ENCODE measurements at regions of chr9 and their contacts with region 1.

Region 1: GRCh38 chr9:97921959-97922724 is at the start of gene TRMO:
- DNase-seq: peak; percentile 99
- H3K4me3 Mint-ChIP-seq: peak within 1 kb of the TSS; percentile 93
- H3K27ac Mint-ChIP-seq: peak within 1 kb of the TSS; percentile 98
- H3K4me1 Mint-ChIP-seq: peaks cover 47% of the 10 kb centered on the region
- H3K27me3 Mint-ChIP-seq: peaks cover 2% of the 10 kb centered on the region
- total RNA-seq, gene TRMO: 9.8 and 13.0 TPM in 2 replicates

Region 2: GRCh38 chr9:97425336-97425972 is 496.7 kb before region 1 on chr9:
- intact Hi-C with region 1: no loop called
- DNase-seq: no peak
- H3K4me3 Mint-ChIP-seq: no peak overlapping the region
- H3K27ac Mint-ChIP-seq: no peak overlapping the region
- H3K4me1 Mint-ChIP-seq: no peaks in the 10 kb centered on the region
- H3K27me3 Mint-ChIP-seq: no peaks in the 10 kb centered on the region

Region 3: DNA sequence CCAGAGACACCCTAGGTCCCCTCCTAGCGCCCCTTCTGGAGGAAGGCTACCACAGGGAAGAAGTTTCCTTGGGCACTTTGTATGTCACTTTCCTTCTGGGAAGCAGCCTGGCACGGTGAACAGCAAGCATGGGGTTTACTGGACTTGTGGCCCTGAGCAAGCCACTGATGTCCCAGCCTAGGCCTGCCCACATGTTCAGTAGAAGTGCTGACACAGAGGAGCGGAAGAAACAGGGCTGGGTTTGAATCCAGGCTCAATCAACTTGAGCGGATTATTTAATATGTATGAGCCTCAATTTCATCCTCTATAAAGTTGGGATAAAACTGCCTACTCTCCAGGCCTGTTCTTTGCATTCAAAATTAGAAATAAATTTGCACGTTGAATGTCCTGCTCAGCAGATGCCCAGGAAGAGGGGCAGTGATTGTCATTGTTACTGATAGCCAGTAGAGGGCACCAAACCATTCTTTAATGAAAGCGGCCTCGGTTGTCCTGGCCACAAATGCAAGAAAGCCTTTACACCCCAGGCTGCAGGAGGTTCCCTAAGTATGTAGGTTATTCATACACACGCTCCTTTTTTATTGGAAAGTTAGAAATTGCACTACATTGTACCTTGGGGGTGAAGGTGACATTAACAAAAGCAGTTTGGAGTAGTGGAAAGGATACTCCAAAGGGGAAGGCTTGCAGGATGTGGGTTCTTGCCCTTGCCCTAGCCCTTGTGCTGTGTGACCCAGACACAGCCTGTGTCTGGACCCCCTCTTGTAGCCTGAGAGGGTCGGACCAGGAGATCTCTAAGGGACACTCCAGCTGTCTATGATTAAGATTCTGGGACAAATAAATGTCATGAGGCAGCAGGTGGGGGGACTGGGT is 211.6 kb before region 1 on chr9:
- intact Hi-C with region 1: loop called (anchors 1 kb)
- DNase-seq: peak; percentile 87
- H3K4me3 Mint-ChIP-seq: peak overlapping the region; percentile 31
- H3K27ac Mint-ChIP-seq: no peak overlapping the region
- H3K4me1 Mint-ChIP-seq: peaks cover 27% of the 10 kb centered on the region
- H3K27me3 Mint-ChIP-seq: peaks cover 26% of the 10 kb centered on the region

Region 4: DNA sequence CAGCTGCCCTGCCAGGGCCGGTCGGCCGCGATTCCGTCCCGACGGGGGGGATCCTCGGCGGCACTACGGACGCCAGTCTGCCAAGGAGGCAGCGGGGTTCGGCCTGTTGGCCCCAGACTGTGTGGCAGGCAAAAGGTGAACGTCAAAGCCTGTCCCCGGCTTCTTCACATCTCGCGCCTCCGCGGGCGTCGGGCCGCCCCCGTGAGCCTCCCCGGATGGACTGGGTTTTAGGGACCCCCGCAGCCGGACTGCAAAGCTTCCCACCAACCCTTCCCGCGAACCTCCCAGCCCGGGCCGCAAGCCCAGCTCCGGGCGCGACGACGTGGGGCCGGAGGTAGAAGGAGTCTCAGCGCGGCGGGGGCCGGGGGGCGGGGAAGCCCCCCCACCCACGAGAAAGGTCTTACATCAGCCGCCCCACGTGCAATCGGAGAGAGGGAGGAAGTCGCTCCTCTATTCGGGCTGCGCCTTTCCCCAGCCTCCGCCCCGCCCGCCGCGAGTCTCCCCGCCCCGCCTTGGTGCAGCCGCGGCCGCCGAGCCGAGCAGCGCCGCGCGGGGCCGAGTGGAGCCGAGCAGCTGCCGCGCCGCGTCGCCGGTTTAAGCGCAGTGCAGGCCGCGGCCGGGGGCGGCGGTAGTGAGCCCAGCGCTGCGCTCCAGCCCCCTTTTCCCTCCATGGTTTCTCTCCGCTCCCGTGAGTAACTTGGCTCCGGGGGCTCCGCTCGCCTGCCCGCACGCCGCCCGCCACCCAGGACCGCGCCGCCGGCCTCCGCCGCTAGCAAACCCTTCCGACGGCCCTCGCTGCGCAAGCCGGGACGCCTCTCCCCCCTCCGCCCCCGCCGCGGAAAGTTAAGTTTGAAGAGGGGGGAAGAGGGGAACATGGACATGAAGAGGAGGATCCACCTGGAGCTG is 60.8 kb after region 1 on chr9 and contains the start of gene ANP32B:
- intact Hi-C with region 1: loop called (anchors 1 kb)
- DNase-seq: peak; percentile 98
- H3K4me3 Mint-ChIP-seq: peak within 1 kb of the TSS; percentile 86
- H3K27ac Mint-ChIP-seq: peak within 1 kb of the TSS; percentile 91
- H3K4me1 Mint-ChIP-seq: peaks cover 31% of the 10 kb centered on the region
- H3K27me3 Mint-ChIP-seq: no peaks in the 10 kb centered on the region
- total RNA-seq, gene ANP32B: 332 and 333 TPM in 2 replicates

Region 5: GRCh38 chr9:98056269-98057137 is 134.4 kb after region 1 on chr9 and contains the start of gene NANS:
- intact Hi-C with region 1: loop called (anchors 1 kb)
- DNase-seq: peak; percentile 98
- H3K4me3 Mint-ChIP-seq: peak within 1 kb of the TSS; percentile 93
- H3K27ac Mint-ChIP-seq: peak within 1 kb of the TSS; percentile 97
- H3K4me1 Mint-ChIP-seq: peaks cover 33% of the 10 kb centered on the region
- H3K27me3 Mint-ChIP-seq: no peaks in the 10 kb centered on the region
- total RNA-seq, gene NANS: 54.0 and 57.1 TPM in 2 replicates

Region 6: DNA sequence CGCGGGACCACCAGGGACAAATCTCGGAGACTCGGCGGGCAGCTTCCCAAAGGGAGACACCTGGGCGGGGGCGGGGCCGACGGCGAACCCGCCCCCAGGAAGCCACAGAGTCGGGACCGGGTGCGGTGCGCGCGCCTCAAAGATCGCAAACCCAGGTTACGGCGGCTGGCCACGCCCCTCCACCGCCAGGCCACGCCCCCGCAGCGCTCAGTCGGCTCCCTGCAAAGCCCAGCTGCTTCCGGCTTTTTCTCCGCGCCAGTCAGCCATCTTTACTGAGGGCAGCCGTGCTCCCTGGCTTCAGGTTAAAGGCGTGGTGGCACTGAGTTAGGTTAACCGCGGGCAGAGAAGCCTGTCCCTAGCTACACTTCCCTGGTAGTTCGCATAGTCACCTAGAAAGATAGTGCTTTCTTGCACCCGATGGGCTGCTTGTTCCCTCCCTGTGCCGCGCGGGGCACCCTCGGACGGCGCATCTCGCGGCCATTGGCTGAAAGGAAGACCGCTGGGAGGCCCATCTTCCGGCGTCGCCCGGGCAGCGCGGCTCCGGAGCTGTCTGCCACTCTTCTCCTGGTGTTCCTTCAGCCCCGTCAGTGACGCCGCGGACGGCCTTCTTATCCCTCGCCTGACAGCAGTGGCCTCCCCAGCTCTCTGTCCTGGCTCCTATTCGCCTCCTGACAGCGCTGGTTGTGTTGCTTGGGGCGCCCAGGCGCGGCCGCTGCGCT is 333.6 kb after region 1 on chr9 and contains the start of gene TBC1D2:
- intact Hi-C with region 1: loop called (anchors 1 kb)
- DNase-seq: peak; percentile 99
- H3K4me3 Mint-ChIP-seq: peak within 1 kb of the TSS; percentile 84
- H3K27ac Mint-ChIP-seq: peak within 1 kb of the TSS; percentile 98
- H3K4me1 Mint-ChIP-seq: peaks cover 21% of the 10 kb centered on the region
- H3K27me3 Mint-ChIP-seq: no peaks in the 10 kb centered on the region
- total RNA-seq, gene TBC1D2: 1.6 and 1.8 TPM in 2 replicates

Measured in activated CD4-positive, alpha-beta T cell treated with anti-CD3 and anti-CD28 coated beads, Interleukin-2, amount 10 ng/mL, durations not matched to agents 24 days and 14 days (primary cell).